H1 (cell line): ENCODE measurements at regions of chr2 and their contacts with region 1.

Region 1: DNA sequence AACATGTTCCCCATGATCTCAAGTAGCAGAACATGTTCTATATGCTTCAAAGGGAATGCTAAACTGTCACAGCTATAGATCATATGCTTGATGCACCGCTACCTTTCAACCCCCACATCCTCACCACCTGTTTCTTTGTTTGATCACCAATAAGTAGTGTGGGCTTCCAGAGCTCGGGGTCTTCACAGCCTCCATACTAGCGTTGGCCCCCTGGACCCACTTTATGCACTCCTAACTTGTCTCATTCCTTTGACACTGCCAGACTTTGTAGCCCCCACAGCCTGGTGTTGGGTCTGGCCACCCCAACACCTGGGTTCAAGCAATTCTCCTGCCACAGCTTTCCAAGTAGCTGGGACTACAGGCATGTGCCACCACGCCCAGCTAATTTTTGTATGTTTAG is 11.6 kb upstream of the RBM44 start:
- DNase-seq: peak in 1 of 2 experiments; percentile 43
- H3K4me3 ChIP-seq: no peak overlapping the region
- H3K27ac ChIP-seq: no peak overlapping the region
- H3K4me1 ChIP-seq: no peaks in the 10 kb centered on the region
- H3K27me3 ChIP-seq: no peaks in the 10 kb centered on the region; a peak in 1 of 7 replicates
- CTCF ChIP-seq: no peak
- EP300 ChIP-seq: no peak
- POLR2A ChIP-seq: no peak
- RAD21 ChIP-seq: no peak

Region 2: GRCh38 chr2:237614151-237614720 is 172.7 kb before region 1 on chr2:
- CTCF ChIA-PET with region 1: no interaction called
- POLR2A ChIA-PET with region 1: no interaction called
- DNase-seq: peak in 1 of 2 experiments; percentile 82
- H3K4me3 ChIP-seq: peak overlapping the region in 1 of 4 experiments; percentile 3; a peak in 1 of 8 replicates
- H3K27ac ChIP-seq: peak overlapping the region; percentile 47; the same call in 1 of the 2 replicates
- H3K4me1 ChIP-seq: peaks cover 9 to 21% (median 17%) of the 10 kb centered on the region in 4 experiments
- H3K27me3 ChIP-seq: no peaks in the 10 kb centered on the region; a peak in 1 of 7 replicates
- CTCF ChIP-seq: peak; percentile 66 to 97 (median 88)
- EP300 ChIP-seq: peak in 1 of 2 experiments; percentile 96; a peak in 2 of 3 replicates
- POLR2A ChIP-seq: peak in 1 of 2 experiments; percentile 65; a peak in 2 of 3 replicates
- RAD21 ChIP-seq: peak; percentile 45 to 66

Region 3: GRCh38 chr2:237732790-237733381 is 54.0 kb before region 1 on chr2:
- CTCF ChIA-PET with region 1: no interaction called
- POLR2A ChIA-PET with region 1: no interaction called
- DNase-seq: no peak
- H3K4me3 ChIP-seq: no peak overlapping the region
- H3K27ac ChIP-seq: no peak overlapping the region
- H3K4me1 ChIP-seq: peaks cover 8 to 23% (median 18%) of the 10 kb centered on the region in 4 experiments
- H3K27me3 ChIP-seq: no peaks in the 10 kb centered on the region
- CTCF ChIP-seq: no peak
- EP300 ChIP-seq: no peak
- POLR2A ChIP-seq: no peak
- RAD21 ChIP-seq: no peak

Region 4: DNA sequence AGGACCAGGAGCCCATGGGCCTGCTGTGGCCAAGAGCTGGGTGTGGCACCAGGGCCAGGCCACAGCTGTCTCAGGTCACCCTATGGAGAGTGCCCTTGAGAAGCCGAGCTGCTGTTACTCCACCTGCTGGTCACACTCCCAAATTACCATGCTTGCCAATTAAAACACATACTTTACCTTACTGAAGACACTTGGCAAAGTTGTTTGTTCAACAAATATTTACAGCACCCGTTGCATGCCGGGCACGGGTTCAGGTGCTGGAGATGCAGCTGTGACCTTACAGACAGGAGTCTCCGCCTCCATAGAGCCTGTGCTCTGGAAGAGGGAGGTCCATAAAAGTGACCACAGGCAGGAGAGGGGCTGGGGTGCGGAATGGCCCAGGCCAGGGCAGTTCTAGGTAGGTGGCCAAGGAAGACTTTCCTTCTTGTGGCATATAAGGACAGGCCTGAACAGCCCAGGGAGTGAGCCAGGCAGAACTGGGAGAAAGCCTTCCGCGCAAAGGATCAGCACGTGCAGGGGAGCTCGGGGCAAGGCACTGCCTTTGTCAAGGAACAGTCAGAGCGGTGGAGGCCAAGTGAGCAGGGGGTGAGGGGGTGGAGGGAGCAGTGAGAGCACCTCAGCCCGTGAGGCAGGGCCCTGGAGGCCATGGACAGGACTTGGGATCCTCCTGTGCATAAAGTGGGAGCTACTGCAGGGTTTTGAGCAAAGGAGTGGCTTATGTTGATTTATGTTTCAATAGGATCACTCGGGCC is 12.0 kb before region 1 on chr2:
- CTCF ChIA-PET with region 1: interaction called, 10 read pairs
- POLR2A ChIA-PET with region 1: interaction called, 3 read pairs
- DNase-seq: peak; percentile 7 to 80
- H3K4me3 ChIP-seq: no peak overlapping the region
- H3K27ac ChIP-seq: no peak overlapping the region
- H3K4me1 ChIP-seq: no peaks in the 10 kb centered on the region; a peak in 2 of 7 replicates
- H3K27me3 ChIP-seq: no peaks in the 10 kb centered on the region
- CTCF ChIP-seq: peak; percentile 65 to 84 (median 78)
- EP300 ChIP-seq: no peak
- POLR2A ChIP-seq: no peak
- RAD21 ChIP-seq: peak; percentile 62 to 69